GM12878 (cell line): ENCODE measurements at regions of chr1 and their contacts with region 1.

Region 1: GRCh38 chr1:26417111-26417759 is 6.6 kb downstream of the LIN28A start:
- DNase-seq: no peak
- ATAC-seq: peak; percentile 100
- H3K4me3 ChIP-seq: no peak overlapping the region
- H3K27ac ChIP-seq: no peak overlapping the region
- H3K4me1 ChIP-seq: no peaks in the 10 kb centered on the region
- H3K27me3 ChIP-seq: peaks cover 0 to 3% of the 10 kb centered on the region in 2 experiments; a peak in 3 of 4 replicates
- CTCF ChIP-seq: peak; percentile 87 to 97 (median 92)
- EP300 ChIP-seq: no peak
- POLR2A ChIP-seq: no peak
- RAD21 ChIP-seq: peak; percentile 71

Region 2: DNA sequence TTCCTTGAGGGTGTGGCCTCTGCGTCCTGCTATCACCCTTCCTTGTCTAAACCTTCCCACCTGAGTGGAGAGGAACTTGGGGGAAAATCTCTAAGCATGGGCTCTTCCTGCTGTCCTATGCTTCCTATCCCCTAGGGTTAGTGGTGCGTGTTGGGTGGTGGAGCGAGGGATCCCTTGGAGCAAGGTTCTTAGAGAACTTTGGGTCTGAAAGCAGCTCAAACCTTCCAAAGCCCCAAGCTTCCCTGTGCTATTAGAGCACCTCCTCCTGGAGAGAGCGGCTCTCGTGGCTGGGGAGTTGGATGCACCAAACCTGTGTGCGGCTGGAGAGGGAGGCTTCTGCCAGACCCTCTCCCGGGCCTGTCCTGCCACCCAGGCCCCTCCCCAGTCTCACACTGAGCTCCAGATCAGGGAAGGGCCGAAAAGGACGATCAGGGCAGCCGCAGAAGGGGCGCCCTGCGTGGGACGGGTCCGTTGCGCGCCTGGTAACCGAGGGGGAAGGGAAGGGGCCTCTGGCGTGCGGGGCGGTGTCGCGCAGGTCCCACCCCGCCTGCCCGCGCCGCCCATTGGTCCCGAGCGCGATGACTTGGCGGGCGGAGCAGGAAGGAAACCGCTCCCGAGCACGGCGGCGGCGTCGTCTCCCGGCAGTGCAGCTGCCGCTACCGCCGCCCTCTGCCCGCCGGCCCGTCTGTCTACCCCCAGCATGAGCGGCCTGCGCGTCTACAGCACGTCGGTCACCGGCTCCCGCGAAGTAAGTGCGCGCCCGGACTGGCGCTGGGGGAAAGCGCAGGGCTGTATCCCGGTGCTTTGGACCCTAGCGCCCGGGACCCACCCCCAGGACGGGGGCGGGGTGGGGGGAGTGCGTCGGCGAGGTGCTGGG is 137.5 kb before region 1 on chr1 and contains the start of gene SH3BGRL3:
- CTCF ChIA-PET with region 1: interaction called, 94 read pairs
- POLR2A ChIA-PET with region 1: no interaction called
- RAD21 ChIA-PET with region 1: interaction called, 20 read pairs
- SMC1A ChIA-PET with region 1: interaction called, 23 read pairs
- in situ Hi-C with region 1: no loop called
- intact Hi-C with region 1: loop called (anchors 2 kb)
- DNase-seq: no peak
- ATAC-seq: peak; percentile 92
- H3K4me3 ChIP-seq: peak within 1 kb of the TSS; percentile 88
- H3K27ac ChIP-seq: peak within 1 kb of the TSS; percentile 87
- H3K4me1 ChIP-seq: peaks cover 53% of the 10 kb centered on the region
- H3K27me3 ChIP-seq: no peaks in the 10 kb centered on the region
- CTCF ChIP-seq: peak; percentile 22 to 47 (median 41); a peak in 4 of 6 replicates
- EP300 ChIP-seq: no peak
- POLR2A ChIP-seq: peak; percentile 96
- RAD21 ChIP-seq: no peak
- polyA plus RNA-seq, gene SH3BGRL3: 121 to 129 TPM

Region 3: DNA sequence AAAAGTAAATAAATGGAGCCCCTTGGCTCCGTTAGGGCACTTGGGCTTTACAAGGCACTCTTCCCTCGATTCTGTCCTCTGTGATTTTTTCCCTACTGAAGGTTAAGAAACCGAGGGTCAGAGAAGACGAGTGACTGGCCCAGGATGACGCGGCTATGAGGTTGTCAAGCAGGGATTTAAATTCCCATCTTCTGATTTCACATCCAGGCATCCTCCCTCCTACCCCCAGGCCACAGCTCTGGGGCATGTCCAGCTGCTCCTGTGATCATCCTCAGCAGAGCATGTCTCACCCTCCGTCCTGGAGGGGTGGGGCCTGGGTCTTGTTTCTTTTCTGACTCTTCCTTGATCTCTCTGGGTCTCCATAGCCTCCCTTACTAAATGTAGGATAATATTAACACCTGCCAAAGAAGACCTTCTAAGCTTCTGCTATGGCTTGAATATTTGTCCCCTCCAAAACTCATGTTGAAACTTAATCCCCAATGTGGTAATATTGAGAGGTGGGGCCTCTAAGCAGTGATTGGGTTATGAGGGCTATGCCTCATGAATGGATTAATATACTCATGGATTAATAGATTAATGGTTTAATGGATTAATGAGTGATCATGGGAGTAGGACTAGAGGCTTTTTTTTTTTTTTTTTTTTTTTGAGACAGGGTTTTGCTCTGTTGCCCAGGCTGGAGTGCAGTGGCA is 67.9 kb before region 1 on chr1:
- CTCF ChIA-PET with region 1: interaction called, 13 read pairs
- POLR2A ChIA-PET with region 1: interaction called, 6 read pairs
- RAD21 ChIA-PET with region 1: no interaction called
- SMC1A ChIA-PET with region 1: no interaction called
- in situ Hi-C with region 1: no loop called
- intact Hi-C with region 1: no loop called
- DNase-seq: no peak
- ATAC-seq: no peak
- H3K4me3 ChIP-seq: no peak overlapping the region
- H3K27ac ChIP-seq: no peak overlapping the region
- H3K4me1 ChIP-seq: no peaks in the 10 kb centered on the region
- H3K27me3 ChIP-seq: no peaks in the 10 kb centered on the region; a peak in 1 of 4 replicates
- CTCF ChIP-seq: no peak
- EP300 ChIP-seq: no peak
- POLR2A ChIP-seq: no peak
- RAD21 ChIP-seq: no peak

Region 4: DNA sequence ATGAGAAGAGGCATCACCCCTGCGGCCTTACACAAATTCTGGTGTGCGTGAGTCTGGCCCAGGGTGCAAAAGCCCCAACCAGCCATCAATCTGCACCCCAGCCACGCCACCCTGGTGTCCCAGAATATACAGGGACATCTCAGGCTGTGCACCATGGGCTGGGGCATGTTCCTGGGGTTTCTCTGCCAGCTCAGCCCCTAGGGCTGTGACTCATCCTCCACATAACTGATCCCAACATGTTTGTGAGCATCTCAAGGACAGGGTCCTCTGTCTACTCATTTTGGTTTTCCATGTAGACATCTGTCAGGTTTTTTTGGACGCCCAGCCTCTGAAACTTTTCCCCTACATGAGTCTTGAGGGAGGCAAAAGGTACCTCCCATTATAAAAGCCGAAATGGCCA is 45.2 kb before region 1 on chr1:
- CTCF ChIA-PET with region 1: interaction called, 17 read pairs
- POLR2A ChIA-PET with region 1: no interaction called
- RAD21 ChIA-PET with region 1: interaction called, 6 read pairs
- SMC1A ChIA-PET with region 1: interaction called, 7 read pairs
- in situ Hi-C with region 1: no loop called
- intact Hi-C with region 1: loop called (anchors 10 kb)
- DNase-seq: no peak
- ATAC-seq: no peak
- H3K4me3 ChIP-seq: no peak overlapping the region
- H3K27ac ChIP-seq: no peak overlapping the region
- H3K4me1 ChIP-seq: 0 out of 2 replicates have a peak, but pooled peaks cover 7% of the 10 kb centered on the region
- H3K27me3 ChIP-seq: no peaks in the 10 kb centered on the region
- CTCF ChIP-seq: no peak
- EP300 ChIP-seq: no peak
- POLR2A ChIP-seq: no peak
- RAD21 ChIP-seq: no peak

Region 5: DNA sequence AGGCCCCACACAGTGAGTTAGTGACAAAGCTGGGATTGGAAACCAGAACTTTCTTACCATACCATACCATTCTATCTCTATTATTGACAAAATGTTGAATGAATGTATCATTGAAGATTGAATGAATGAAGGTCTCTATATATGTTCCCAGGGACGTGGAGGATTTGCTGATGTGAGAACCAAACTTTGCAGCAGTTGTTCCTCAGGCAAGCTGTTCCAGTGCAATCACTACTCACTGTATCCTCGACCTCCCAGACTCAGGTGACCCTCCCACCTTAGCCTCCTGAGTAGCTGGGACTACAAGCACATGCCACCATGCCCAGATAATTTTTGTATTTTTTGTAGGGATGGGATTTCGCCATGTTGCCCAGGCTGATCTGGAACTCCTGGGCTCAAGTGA is 18.2 kb before region 1 on chr1:
- CTCF ChIA-PET with region 1: interaction called, 16 read pairs
- POLR2A ChIA-PET with region 1: no interaction called
- RAD21 ChIA-PET with region 1: interaction called, 3 read pairs
- SMC1A ChIA-PET with region 1: interaction called, 3 read pairs
- in situ Hi-C with region 1: no loop called
- intact Hi-C with region 1: no loop called
- DNase-seq: no peak
- ATAC-seq: no peak
- H3K4me3 ChIP-seq: no peak overlapping the region
- H3K27ac ChIP-seq: no peak overlapping the region
- H3K4me1 ChIP-seq: no peaks in the 10 kb centered on the region
- H3K27me3 ChIP-seq: no peaks in the 10 kb centered on the region
- CTCF ChIP-seq: no peak
- EP300 ChIP-seq: no peak
- POLR2A ChIP-seq: no peak
- RAD21 ChIP-seq: no peak